ENCODE measurements at regions of chr9 and their contacts with region 1.

Region 1: GRCh38 chr9:132575005-132575609 is 7.3 kb upstream of the BARHL1 start:
- DNase-seq: peak; percentile 81
- ATAC-seq: peak; percentile 90

Region 2: GRCh38 chr9:132350861-132351315 is 224.2 kb before region 1 on chr9:
- intact Hi-C with region 1: no loop called
- DNase-seq: no peak
- ATAC-seq: no peak

Region 3: DNA sequence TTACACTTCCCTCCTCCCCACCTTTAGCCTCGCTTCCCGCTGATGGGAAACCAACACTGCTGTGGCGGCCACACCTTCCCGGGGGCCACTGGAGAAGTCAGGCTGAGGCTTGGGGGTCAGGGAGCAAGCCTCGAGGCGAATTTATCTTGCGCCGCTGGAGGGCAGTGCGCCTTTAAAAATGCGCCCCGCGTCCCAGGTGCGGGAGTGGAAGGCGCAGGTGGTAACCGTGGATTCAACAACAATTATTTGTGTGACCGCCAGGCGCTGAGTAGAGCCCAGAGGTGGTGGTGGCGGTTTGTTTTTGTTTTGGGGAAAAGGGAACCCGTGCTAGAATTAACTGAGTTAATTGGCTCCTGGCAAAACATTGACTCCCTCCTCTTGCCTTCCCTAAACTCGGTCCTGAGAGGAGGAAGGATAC is 164.0 kb before region 1 on chr9:
- intact Hi-C with region 1: loop called (anchors 5 kb)
- DNase-seq: peak; percentile 68
- ATAC-seq: peak; percentile 47

Region 4: DNA sequence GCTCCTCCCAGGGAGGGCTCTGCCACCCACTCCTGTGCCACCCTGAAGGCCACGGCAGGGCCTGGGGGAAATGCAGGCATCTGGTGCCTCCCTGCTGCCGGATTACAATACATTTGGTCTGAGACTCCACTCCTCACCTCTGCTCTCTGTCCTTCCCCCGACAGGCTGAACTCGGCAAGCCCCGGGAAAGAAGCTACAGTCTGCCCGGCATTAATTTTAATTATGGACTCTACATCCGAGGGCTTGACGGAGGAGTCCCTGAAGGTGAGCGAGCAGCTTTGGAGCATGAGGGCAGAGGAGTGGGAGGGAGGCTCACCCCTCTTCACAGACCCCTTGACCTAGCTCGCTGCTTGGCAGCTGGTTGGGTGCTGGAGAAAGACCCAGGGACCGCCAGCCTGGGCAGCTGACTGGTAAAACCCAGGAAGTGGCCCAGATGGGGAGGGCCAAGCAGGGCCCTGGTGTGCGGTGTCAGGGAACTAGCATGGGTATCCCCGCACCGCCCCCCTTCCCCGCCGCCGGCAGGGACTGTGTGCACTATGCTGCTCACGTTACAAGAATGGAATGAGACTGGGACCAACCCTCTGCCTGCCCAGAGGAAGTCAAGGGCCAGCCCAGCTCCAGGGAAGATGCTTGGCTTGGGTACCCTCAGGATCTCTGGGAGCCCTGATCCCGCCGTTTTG is 76.4 kb before region 1 on chr9:
- intact Hi-C with region 1: no loop called
- DNase-seq: peak; percentile 10
- ATAC-seq: no peak